Calu3 (cell line): ENCODE measurements at regions of chr1 and their contacts with region 1.

Region 1: GRCh38 chr1:52683367-52683940 is 14.7 kb downstream of the COA7 start:
- DNase-seq: no peak
- H3K4me3 Mint-ChIP-seq: no peak overlapping the region
- H3K27ac Mint-ChIP-seq: no peak overlapping the region
- H3K4me1 Mint-ChIP-seq: no peaks in the 10 kb centered on the region
- H3K27me3 Mint-ChIP-seq: no peaks in the 10 kb centered on the region
- CTCF ChIP-seq: no peak

Region 2: GRCh38 chr1:52404116-52404986 is 279.1 kb before region 1 on chr1 and contains the starts of genes ORC1 and PRPF38A:
- CTCF ChIA-PET with region 1: interaction called, 3 read pairs
- intact Hi-C with region 1: loop called (anchors 10 kb)
- DNase-seq: peak; percentile 96
- H3K4me3 Mint-ChIP-seq: peak within 1 kb of the TSS; percentile 100
- H3K27ac Mint-ChIP-seq: peak within 1 kb of the TSS; percentile 94
- H3K4me1 Mint-ChIP-seq: peaks cover 24% of the 10 kb centered on the region
- H3K27me3 Mint-ChIP-seq: no peaks in the 10 kb centered on the region
- CTCF ChIP-seq: peak; percentile 51
- total RNA-seq, gene ORC1: 15.5 and 17.2 TPM in 2 replicates
- total RNA-seq, gene PRPF38A: 46.7 and 52.4 TPM in 2 replicates

Region 3: DNA sequence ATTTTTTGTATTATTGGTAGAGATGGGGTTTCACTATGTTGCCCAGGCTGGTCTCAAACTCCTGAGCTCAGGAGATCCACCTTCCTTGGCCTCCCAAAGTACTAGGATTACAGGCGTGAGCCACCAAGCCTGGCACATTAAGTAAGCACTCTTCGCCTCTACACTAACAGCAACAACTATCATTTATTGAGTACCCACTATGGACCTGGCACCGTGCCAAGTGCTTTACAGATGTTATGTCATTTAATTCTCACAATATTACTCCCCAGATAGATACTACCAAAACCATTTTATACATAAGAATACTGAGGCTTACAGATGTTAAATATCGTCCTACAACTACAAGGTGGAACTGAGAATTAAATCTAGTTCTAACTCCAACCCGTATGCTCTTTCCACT is 180.7 kb before region 1 on chr1:
- CTCF ChIA-PET with region 1: no interaction called
- intact Hi-C with region 1: loop called (anchors 10 kb)
- DNase-seq: peak; percentile 2
- H3K4me3 Mint-ChIP-seq: no peak overlapping the region
- H3K27ac Mint-ChIP-seq: no peak overlapping the region
- H3K4me1 Mint-ChIP-seq: no peaks in the 10 kb centered on the region
- H3K27me3 Mint-ChIP-seq: no peaks in the 10 kb centered on the region
- CTCF ChIP-seq: no peak

Region 4: DNA sequence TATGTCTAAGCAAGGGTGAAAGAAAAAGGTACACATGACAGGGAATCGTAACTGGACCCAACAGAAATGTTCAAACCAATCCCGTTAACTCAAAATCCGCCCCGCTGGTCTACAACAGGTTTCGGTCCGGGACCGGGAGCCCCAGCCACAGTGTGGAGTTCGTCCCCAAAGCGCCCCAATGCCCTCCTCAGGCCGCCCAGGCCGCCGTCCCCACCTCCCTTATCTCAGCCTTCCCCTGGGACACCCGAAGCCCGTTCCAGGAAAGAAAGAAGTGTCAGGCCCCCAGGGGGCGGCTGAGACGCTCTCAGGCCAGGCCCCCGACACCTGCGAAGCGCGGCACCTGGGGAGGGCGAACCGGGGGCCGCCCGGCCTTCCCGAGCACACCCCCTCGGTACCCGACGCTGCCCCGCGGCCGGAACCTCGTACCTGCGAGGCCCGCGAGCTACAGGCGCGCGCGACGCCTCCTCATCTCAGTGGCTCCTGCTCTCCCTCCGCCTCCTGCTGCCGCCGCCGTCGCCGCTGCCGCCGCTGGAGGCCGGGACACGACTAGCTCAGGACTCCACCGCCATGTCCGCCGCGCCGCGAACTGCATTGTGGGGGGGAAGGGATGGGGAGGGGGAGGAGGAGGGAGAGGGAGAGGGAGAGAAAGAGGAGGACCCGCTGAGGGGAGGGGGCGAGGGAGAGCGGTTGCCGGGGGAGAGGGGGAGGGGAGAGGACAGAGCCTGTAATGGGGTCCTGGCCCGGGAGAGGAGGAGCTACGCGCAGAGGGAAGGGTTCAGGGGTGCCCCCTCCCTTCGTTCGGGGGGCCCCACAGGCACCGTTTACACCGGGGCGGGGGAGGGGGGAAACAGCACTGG is 130.7 kb before region 1 on chr1 and contains the start of gene TUT4:
- CTCF ChIA-PET with region 1: interaction called, 7 read pairs
- intact Hi-C with region 1: loop called (anchors 5 kb)
- DNase-seq: peak; percentile 72
- H3K4me3 Mint-ChIP-seq: no peak within 1 kb of the TSS
- H3K27ac Mint-ChIP-seq: no peak within 1 kb of the TSS
- H3K4me1 Mint-ChIP-seq: peaks cover 27% of the 10 kb centered on the region
- H3K27me3 Mint-ChIP-seq: no peaks in the 10 kb centered on the region
- CTCF ChIP-seq: no peak
- total RNA-seq, gene TUT4: 41.4 and 55.9 TPM in 2 replicates